MCF 10A (cell line): ENCODE measurements at regions of chr1 and their contacts with region 1.

Region 1: DNA sequence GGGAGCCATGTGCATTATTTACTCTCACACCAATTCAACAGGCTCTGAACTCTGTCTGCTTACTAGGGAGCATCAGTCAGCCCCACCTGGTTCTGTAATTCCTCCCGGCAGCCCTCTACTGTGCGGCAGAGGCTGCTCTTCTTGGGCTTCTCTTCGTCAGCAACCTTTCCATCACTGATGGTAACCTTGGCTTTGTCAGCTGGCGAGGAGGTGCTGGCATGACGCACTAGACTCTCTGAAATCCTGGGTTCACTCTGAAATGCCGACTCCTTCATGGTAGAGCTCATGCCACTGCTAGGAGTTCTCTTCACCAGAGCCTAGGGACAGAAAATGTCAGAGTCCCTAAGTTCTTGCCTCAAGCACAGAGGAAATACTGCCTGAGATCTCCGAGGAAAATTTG is 49.2 kb downstream of the UBR4 start:
- DNase-seq: no peak
- H3K4me3 Mint-ChIP-seq: no peak overlapping the region
- H3K27ac Mint-ChIP-seq: no peak overlapping the region
- H3K4me1 Mint-ChIP-seq: no peaks in the 10 kb centered on the region
- H3K27me3 Mint-ChIP-seq: no peaks in the 10 kb centered on the region
- CTCF ChIP-seq: no peak

Region 2: DNA sequence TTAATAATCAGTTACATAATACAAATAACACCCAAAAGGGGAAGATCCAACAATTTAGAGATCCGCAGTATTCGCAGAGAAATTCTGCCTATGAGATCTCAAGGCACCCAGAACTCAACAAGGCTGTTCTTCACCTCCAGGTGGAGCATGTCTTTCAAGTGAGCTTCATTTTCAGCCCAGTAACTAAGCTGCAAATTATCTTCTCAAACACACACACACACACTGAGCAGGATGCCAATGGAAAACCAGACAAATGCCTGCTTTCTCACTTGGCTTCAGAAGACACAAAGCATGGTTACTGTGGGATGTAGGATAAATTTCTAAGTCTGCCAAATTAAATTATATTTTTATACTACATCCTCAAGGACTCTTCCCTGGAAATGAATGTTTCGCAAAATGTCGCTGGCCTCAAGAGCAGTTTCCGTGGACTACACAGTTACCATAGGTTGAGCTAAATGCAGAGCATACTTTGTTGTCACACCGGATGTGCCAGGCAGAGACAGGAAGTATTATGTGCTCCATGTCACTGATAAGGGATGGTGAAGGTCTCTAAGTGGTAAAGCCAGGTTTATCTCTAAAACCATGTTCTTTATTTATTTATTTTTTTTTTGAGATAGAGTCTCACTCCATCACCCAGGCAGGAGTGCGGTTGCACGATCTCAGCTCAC is 18.9 kb after region 1 on chr1:
- CTCF ChIA-PET with region 1: interaction called, 4 read pairs
- POLR2A ChIA-PET with region 1: interaction called, 4 read pairs
- intact Hi-C with region 1: loop called (anchors 1 kb)
- DNase-seq: peak; percentile 20
- H3K4me3 Mint-ChIP-seq: no peak overlapping the region
- H3K27ac Mint-ChIP-seq: peak overlapping the region; percentile 5
- H3K4me1 Mint-ChIP-seq: no peaks in the 10 kb centered on the region
- H3K27me3 Mint-ChIP-seq: no peaks in the 10 kb centered on the region
- CTCF ChIP-seq: peak; percentile 10